Aorta (tissue), 5 donors: ENCODE measurements at regions of chrX and their contacts with region 1.

Region 1: GRCh38 chrX:9341291-9342201 is 123.3 kb upstream of the TBL1X start:
- DNase-seq: peak; percentile 88 to 93
- ATAC-seq: peak; percentile 42
- H3K4me3 ChIP-seq: peak overlapping the region in 1 of 2 donors; percentile 64
- H3K27ac ChIP-seq: peak overlapping the region; percentile 74 to 83
- H3K4me1 ChIP-seq: no peaks in the 10 kb centered on the region
- H3K27me3 ChIP-seq: no peaks in the 10 kb centered on the region

Region 2: GRCh38 chrX:8971116-8971515 is 370.4 kb before region 1 on chrX:
- intact Hi-C with region 1: loop called in 1 of 2 experiments (anchors 10 kb)
- DNase-seq: no peak
- ATAC-seq: no peak
- H3K4me3 ChIP-seq: no peak overlapping the region
- H3K27ac ChIP-seq: no peak overlapping the region
- H3K4me1 ChIP-seq: no peaks in the 10 kb centered on the region
- H3K27me3 ChIP-seq: no peaks in the 10 kb centered on the region

Region 3: DNA sequence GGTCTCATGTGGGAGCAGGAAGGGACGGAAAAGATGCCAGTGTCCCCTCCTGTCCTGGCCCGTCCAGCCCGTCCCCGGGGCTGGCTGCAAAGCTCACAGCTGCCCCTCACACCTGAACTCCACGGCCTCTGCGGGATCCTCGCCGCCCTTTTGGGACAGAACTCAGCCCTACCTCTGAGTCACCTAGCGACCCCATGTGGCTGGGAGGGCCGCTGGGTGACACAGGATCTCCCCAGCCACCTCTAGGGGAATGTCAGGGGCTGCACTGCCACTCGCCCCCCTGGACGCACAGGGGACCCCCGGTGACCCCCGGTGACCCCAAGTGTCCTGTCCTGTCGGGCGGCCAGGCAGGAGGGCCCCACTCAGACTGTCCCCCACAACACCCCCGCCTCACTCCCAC is 308.4 kb before region 1 on chrX:
- intact Hi-C with region 1: no loop called
- DNase-seq: no peak
- ATAC-seq: no peak
- H3K4me3 ChIP-seq: no peak overlapping the region
- H3K27ac ChIP-seq: no peak overlapping the region
- H3K4me1 ChIP-seq: no peaks in the 10 kb centered on the region
- H3K27me3 ChIP-seq: no peaks in the 10 kb centered on the region

Region 4: GRCh38 chrX:9464435-9465371 is 123.2 kb after region 1 on chrX and contains the start of gene TBL1X:
- intact Hi-C with region 1: loop called (anchors 1 kb)
- DNase-seq: peak; percentile 69 to 87
- ATAC-seq: peak; percentile 71
- H3K4me3 ChIP-seq: peak within 1 kb of the TSS; percentile 95 to 99
- H3K27ac ChIP-seq: peak within 1 kb of the TSS; percentile 72 to 82
- H3K4me1 ChIP-seq: no peaks in the 10 kb centered on the region
- H3K27me3 ChIP-seq: no peaks in the 10 kb centered on the region
- total RNA-seq, gene TBL1X: 42.1 to 81.2 TPM

Region 5: DNA sequence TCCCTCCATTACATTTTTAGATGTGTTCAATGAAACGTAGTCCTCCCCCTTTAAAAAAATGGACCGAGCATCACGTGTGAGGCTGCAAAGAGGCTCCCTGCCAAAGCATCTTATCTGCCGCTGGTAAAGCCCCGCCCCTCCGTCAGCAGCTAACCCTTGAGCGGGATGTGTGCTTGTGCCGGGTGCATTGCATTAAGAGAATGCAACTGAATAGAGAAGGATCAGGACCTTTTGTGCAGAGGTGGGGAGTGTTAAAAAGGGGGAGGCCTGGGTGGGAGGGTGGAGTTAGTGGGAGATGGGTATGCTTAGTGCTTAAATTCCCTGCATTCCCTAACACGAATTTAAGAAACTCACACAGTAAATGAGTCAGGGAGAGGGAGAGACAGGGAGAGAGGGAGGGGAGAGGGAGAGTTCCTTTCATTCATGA is 189.3 kb after region 1 on chrX:
- intact Hi-C with region 1: loop called (anchors 10 kb)
- DNase-seq: peak; percentile 77 to 80
- ATAC-seq: peak; percentile 65
- H3K4me3 ChIP-seq: no peak overlapping the region
- H3K27ac ChIP-seq: no peak overlapping the region
- H3K4me1 ChIP-seq: peaks cover 0 to 1% of the 10 kb centered on the region in 2 donors
- H3K27me3 ChIP-seq: no peaks in the 10 kb centered on the region

Region 6: GRCh38 chrX:9604111-9604907 is 262.8 kb after region 1 on chrX:
- intact Hi-C with region 1: no loop called
- DNase-seq: peak; percentile 73 to 90
- ATAC-seq: peak; percentile 69
- H3K4me3 ChIP-seq: no peak overlapping the region
- H3K27ac ChIP-seq: no peak overlapping the region
- H3K4me1 ChIP-seq: peaks cover 0 to 2% of the 10 kb centered on the region in 2 donors
- H3K27me3 ChIP-seq: no peaks in the 10 kb centered on the region

Region 7: GRCh38 chrX:9708904-9709553 is 367.5 kb after region 1 on chrX:
- intact Hi-C with region 1: loop called in 1 of 2 experiments (anchors 10 kb)
- DNase-seq: peak; percentile 89 to 94
- ATAC-seq: peak; percentile 82
- H3K4me3 ChIP-seq: no peak overlapping the region
- H3K27ac ChIP-seq: no peak overlapping the region
- H3K4me1 ChIP-seq: no peaks in the 10 kb centered on the region
- H3K27me3 ChIP-seq: no peaks in the 10 kb centered on the region

Region 8: GRCh38 chrX:9785944-9786797 is 444.6 kb after region 1 on chrX and contains the start of gene SHROOM2:
- intact Hi-C with region 1: no loop called
- DNase-seq: no peak
- ATAC-seq: no peak
- H3K4me3 ChIP-seq: peak within 1 kb of the TSS; percentile 52 to 63
- H3K27ac ChIP-seq: no peak within 1 kb of the TSS
- H3K4me1 ChIP-seq: no peaks in the 10 kb centered on the region
- H3K27me3 ChIP-seq: no peaks in the 10 kb centered on the region
- total RNA-seq, gene SHROOM2: 2.1 to 2.5 TPM